ENCODE measurements at regions of chr2 and their contacts with region 1.

Region 1: DNA sequence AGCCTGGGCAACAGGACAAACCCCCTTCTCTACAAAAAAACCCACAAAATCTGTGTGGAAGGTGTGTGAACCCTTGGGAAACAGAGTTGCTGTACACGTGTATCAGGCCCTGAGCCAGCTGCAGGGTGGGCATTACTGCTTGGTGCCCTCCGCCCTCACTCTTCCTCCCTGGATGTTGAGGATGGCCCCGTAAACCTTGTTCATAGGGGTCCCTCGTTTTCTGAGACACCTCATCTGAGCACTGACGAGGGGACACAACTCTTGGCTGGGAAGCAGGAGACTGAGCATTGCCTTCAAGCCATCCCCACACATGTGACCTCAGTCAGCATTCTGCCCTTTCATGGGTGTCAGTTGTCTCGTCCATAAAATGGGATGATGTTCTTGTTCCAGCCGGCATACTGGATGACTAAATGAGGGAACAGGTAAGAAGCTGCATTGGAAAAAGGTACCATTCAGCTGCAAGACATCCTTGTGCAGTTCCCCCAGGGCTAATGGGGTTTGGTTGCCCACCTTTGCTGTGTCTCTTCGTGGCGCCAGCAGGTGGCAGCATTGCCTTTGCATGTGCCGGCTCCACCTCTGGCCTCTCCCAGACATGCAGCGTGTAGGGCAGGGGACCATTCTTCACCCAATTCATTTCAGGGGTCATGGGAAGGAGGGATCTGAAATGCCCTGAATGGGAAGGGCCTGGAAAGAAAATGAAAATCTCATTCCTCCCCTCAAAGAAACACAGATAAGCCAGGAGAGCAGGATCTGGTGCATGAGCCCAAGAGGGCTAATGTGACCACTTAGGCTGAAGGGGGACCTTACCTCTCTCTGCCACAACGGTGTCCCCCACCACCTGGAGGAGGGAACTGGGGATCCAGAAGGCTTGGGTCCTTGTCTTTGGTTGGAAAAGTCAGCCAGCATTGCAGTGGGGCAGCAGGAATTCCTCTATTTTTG is 36.4 kb upstream of the HAAO start:
- DNase-seq: peak; percentile 60 to 75
- H3K4me3 ChIP-seq: no peak overlapping the region
- H3K27ac ChIP-seq: no peak overlapping the region
- H3K4me1 ChIP-seq: 0 out of 2 replicates have a peak, but pooled peaks cover 7% of the 10 kb centered on the region
- H3K27me3 ChIP-seq: no peaks in the 10 kb centered on the region
- CTCF ChIP-seq: peak; percentile 99

Region 2: DNA sequence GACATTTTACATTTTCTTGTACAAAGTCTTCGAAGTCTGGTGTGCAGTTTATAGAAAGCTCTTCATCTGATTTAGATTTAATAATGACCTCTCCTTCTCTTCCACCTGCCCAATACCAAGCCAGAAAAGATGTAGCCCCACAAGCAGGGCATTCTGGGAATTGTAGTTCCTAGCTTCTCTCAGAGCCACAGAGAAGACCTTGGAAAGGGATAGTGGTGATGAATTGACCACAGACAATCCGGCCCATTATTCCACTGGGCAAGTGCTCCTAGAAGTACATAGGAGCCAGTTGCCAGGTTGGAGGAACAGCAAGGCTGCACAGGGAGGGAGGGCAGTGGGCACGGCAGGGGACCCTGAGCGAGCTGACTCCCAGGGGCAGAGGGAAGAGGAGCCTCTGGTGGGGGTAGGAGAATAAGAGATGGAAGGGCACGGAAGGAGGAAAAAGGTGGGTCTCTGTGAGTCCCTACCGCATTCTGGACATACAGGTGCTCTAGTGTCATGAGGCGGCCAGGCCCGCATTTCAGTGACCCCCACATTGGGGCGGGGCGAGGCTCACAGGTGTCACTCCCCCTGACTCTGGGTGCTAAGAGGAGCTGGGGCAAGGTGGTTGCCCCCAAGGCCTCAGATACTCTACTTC is 116.1 kb after region 1 on chr2:
- CTCF ChIA-PET with region 1: interaction called, 3 read pairs
- POLR2A ChIA-PET with region 1: no interaction called
- intact Hi-C with region 1: loop called (anchors 2 kb)
- DNase-seq: no peak
- H3K4me3 ChIP-seq: no peak overlapping the region
- H3K27ac ChIP-seq: no peak overlapping the region
- H3K4me1 ChIP-seq: peaks cover 3% of the 10 kb centered on the region; the same call in 1 of the 2 replicates
- H3K27me3 ChIP-seq: no peaks in the 10 kb centered on the region
- CTCF ChIP-seq: no peak

Region 3: GRCh38 chr2:43542285-43542937 is 713.7 kb after region 1 on chr2:
- CTCF ChIA-PET with region 1: interaction called, 3 read pairs
- POLR2A ChIA-PET with region 1: no interaction called
- intact Hi-C with region 1: loop called (anchors 1 kb)
- DNase-seq: peak in 1 of 2 experiments; percentile 56
- H3K4me3 ChIP-seq: no peak overlapping the region
- H3K27ac ChIP-seq: no peak overlapping the region
- H3K4me1 ChIP-seq: no peaks in the 10 kb centered on the region
- H3K27me3 ChIP-seq: no peaks in the 10 kb centered on the region
- CTCF ChIP-seq: peak; percentile 91

Region 4: DNA sequence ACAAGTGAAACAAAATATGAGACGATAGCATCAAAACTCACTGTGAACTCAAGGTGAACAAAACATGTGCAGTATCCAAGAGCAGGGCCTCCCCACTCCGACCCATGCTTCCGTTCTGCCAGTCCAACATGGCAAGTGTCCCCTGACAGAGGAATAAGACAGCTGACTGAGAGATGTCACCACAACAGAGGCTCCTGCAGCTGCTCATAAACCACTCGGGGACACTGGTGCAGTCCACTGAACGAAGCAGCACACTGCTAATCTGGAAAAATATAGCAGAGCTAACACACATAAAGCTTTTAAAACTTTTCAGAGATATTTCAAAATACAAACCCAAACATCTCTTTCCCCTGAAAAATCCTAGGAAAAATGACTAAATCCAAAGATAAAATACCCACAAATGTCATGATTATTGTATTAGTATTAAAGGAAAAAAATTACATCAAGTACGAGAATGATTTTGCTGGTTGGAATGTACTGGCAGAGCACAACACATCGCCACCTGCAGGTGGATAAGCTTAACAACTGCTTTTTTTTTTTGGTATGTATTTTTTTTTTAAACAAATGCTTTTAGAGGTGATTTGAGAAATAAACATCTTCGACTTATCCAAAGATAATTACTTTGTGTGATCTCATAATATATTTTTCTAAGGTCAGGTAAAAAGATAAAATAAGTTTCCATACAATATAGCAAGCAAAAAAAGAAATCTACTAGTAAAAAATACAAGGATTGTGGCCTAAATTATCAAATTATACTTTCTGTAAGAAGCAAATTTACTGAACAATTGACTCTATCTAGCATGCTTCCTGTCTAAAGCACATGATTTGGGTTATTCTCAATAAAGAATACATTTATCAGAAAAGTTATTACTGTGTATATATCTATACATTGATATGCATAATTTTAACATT is 748.5 kb after region 1 on chr2:
- CTCF ChIA-PET with region 1: interaction called, 9 read pairs
- POLR2A ChIA-PET with region 1: no interaction called
- intact Hi-C with region 1: loop called (anchors 1 kb)
- DNase-seq: peak; percentile 6 to 65
- H3K4me3 ChIP-seq: no peak overlapping the region
- H3K27ac ChIP-seq: no peak overlapping the region
- H3K4me1 ChIP-seq: no peaks in the 10 kb centered on the region
- H3K27me3 ChIP-seq: no peaks in the 10 kb centered on the region
- CTCF ChIP-seq: peak; percentile 87

Region 5: GRCh38 chr2:43611987-43612894 is 783.5 kb after region 1 on chr2:
- CTCF ChIA-PET with region 1: no interaction called
- POLR2A ChIA-PET with region 1: no interaction called
- intact Hi-C with region 1: loop called (anchors 1 kb)
- DNase-seq: peak; percentile 77 to 79
- H3K4me3 ChIP-seq: no peak overlapping the region
- H3K27ac ChIP-seq: no peak overlapping the region
- H3K4me1 ChIP-seq: 0 out of 2 replicates have a peak, but pooled peaks cover 3% of the 10 kb centered on the region
- H3K27me3 ChIP-seq: no peaks in the 10 kb centered on the region
- CTCF ChIP-seq: peak; percentile 96